Dorsolateral prefrontal cortex (tissue), 120 donors: ENCODE measurements at regions of chr5 and their contacts with region 1.

Region 1: GRCh38 chr5:39274398-39275085 is 55.2 kb upstream of the FYB1 start:
- DNase-seq: no peak
- H3K4me3 ChIP-seq: peak overlapping the region in 8 of 59 donors; percentile 0 to 30 (median 8)
- H3K27ac ChIP-seq: peak overlapping the region in 37 of 59 donors; percentile 1 to 80 (median 47)
- H3K27me3 ChIP-seq: no peaks in the 10 kb centered on the region
- CTCF ChIP-seq: no peak

Region 2: DNA sequence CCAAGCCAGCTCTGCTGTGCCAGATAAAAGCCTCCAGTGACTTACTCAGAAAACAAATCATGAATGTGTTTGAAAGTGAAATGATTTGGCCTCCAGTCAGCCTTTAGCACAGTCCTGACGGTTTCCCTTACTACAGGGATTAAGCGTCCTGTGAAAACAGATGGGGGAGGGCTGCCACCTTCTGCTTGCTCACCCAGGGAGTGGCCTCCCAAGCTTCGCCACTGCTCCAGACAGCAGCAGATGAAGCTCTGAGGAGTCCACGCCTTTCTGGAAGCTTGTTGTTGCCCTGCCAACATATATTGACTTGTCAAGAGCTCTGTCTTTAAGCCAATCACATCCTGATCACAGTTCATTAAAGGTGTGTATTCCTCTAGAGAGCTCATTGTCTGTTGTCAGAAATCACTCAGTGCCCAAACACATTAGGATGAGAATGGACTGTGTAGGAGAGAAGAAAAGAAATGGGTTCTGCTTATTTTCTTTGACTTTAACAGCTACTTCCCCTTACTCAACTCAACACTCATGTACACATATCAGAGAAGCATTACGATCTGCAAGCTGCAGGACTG is 50.3 kb before region 1 on chr5:
- intact Hi-C with region 1: loop called in 1 of 2 experiments (anchors 5 kb)
- DNase-seq: no peak
- H3K4me3 ChIP-seq: no peak overlapping the region
- H3K27ac ChIP-seq: peak overlapping the region in 2 of 59 donors; percentile 35 to 63
- H3K27me3 ChIP-seq: no peaks in the 10 kb centered on the region
- CTCF ChIP-seq: no peak

Region 3: DNA sequence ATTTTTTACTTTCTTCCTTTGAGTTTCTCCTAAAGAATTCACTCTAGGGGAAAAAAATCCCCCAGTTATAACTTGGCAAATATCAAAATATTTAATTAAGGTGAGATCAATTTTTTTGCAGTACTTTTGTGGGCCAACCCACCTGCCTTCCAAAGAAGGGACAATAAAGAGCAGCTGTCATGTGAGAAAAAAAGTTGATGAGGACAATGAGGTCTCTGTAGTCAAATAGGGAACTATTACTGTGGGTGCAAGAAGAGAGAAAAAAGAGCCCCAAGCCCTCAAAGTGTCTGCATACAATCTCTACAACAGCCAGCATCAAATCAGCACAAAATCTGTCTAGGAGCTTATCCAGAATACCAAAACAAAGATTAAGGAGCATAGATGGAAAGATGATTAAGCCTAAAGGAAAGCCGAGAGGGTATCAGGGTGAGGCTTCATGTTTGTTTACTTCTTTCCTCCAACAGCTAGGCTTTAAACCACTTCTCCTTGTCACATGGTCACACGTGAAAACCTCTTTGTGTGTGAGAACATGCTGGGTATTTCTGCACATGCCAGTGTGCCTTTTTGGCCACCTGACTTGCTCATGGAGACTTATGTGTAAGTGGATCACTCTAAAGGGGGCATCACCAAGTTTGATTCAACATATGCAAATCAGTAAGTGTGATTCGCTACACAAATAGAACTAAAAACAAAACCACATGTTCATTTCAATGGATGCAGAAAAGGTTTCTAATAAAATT is 36.0 kb before region 1 on chr5:
- intact Hi-C with region 1: loop called in 1 of 2 experiments (anchors 5 kb)
- DNase-seq: no peak
- H3K4me3 ChIP-seq: no peak overlapping the region
- H3K27ac ChIP-seq: no peak overlapping the region
- H3K27me3 ChIP-seq: no peaks in the 10 kb centered on the region
- CTCF ChIP-seq: no peak

Region 4: GRCh38 chr5:39447059-39447458 is 172.5 kb after region 1 on chr5:
- intact Hi-C with region 1: no loop called
- DNase-seq: no peak
- H3K4me3 ChIP-seq: no peak overlapping the region
- H3K27ac ChIP-seq: no peak overlapping the region
- H3K27me3 ChIP-seq: no peaks in the 10 kb centered on the region
- CTCF ChIP-seq: no peak